ENCODE measurements at regions of chr11 and their contacts with region 1.

Region 1: DNA sequence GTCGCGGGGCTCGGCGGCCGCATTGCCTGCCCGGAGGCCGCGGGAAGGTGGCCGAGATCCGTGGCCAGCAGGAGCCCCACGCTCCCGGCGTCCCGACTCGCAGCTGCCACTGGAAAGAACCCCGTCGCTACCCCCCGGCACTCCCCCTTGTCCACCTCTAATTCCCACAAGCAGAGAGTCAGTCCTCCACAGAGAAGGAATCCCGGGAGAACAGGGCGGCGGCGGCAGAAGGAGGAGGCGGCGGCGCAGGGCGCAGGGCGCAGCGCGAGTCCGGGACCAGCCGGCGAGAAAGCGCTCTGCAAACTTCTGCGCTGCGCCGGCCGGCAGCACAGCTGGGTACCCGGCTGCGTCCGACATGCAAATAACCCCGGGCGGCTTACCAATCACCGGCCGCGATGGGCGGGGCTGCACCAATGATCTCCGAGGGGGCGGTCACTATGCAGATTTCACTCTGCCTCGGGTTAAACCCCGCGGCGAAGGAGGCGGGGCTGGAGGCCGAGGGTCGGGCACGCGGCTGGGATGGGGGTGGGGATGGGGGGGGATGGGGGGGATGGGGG is at the start of gene ABTB2:
- DNase-seq: peak; percentile 96
- H3K4me3 ChIP-seq: peak within 1 kb of the TSS in 2 of 3 experiments; percentile 26 to 29
- H3K27ac ChIP-seq: no peak within 1 kb of the TSS
- H3K4me1 ChIP-seq: peaks cover 14% of the 10 kb centered on the region
- H3K27me3 ChIP-seq: peaks cover 24 to 40% of the 10 kb centered on the region in 2 experiments
- CTCF ChIP-seq: no peak
- POLR2A ChIP-seq: peak; percentile 69
- total RNA-seq, gene ABTB2: 0.11 and 0.25 TPM in 2 replicates

Region 2: GRCh38 chr11:33996498-33997454 is 361.0 kb before region 1 on chr11:
- CTCF ChIA-PET with region 1: interaction called, 8 read pairs
- POLR2A ChIA-PET with region 1: no interaction called
- dilution Hi-C with region 1: no loop called
- intact Hi-C with region 1: loop called (anchors 1 kb)
- DNase-seq: peak; percentile 75
- H3K4me3 ChIP-seq: no peak overlapping the region
- H3K27ac ChIP-seq: no peak overlapping the region
- H3K4me1 ChIP-seq: no peaks in the 10 kb centered on the region
- H3K27me3 ChIP-seq: peaks cover 20 to 27% of the 10 kb centered on the region in 2 experiments
- CTCF ChIP-seq: peak; percentile 63 to 77
- POLR2A ChIP-seq: no peak

Region 3: DNA sequence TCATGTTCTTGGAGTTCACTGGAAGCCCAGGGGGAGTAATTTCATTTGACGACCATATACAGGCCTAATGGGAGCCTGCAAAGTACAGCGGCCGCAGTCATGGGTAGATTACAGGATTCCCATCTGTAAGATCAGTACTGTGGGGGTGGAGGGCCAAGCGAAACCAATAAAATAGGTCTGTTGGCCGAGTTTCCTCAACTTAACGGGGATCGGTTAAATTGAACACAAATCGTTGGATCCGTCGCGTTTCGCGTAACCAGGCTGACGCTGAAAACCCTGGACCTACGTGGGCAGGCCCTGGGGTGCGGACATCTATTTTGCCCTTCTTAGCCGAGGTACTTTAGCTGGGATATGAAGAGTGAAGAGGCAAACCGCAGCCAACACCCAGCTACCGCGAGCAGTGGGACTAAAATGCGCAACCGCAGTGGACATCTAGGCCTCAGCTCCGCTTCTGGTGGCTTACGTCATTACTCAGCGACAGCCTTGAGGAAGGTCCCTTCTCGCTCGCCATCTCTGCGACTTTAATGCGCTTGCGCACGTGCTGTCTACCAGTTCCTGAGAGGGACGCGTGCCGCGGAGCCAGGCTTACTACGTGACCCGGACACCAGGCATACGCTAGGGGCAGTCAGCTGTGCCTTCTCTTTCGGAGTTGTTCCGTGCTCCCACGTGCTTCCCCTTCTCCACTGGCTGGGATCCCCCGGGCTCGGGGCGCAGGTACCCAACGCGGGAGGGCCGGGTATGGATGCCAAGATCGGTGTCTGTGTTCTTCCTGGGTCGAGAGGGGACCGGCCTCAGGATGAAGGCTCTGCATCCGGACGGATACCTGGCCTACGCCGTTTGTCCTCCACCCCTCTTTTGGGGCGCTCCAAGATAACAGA is 252.5 kb before region 1 on chr11 and contains the start of gene NAT10:
- CTCF ChIA-PET with region 1: no interaction called
- POLR2A ChIA-PET with region 1: no interaction called
- dilution Hi-C with region 1: no loop called
- intact Hi-C with region 1: loop called (anchors 2 kb)
- DNase-seq: peak; percentile 99
- H3K4me3 ChIP-seq: peak within 1 kb of the TSS; percentile 27 to 79 (median 71)
- H3K27ac ChIP-seq: peak within 1 kb of the TSS; percentile 44
- H3K4me1 ChIP-seq: peaks cover 19% of the 10 kb centered on the region
- H3K27me3 ChIP-seq: no peaks in the 10 kb centered on the region
- CTCF ChIP-seq: peak in 1 of 2 donors; percentile 16
- POLR2A ChIP-seq: peak; percentile 99
- total RNA-seq, gene NAT10: 54.9 and 57.6 TPM in 2 replicates

Region 4: DNA sequence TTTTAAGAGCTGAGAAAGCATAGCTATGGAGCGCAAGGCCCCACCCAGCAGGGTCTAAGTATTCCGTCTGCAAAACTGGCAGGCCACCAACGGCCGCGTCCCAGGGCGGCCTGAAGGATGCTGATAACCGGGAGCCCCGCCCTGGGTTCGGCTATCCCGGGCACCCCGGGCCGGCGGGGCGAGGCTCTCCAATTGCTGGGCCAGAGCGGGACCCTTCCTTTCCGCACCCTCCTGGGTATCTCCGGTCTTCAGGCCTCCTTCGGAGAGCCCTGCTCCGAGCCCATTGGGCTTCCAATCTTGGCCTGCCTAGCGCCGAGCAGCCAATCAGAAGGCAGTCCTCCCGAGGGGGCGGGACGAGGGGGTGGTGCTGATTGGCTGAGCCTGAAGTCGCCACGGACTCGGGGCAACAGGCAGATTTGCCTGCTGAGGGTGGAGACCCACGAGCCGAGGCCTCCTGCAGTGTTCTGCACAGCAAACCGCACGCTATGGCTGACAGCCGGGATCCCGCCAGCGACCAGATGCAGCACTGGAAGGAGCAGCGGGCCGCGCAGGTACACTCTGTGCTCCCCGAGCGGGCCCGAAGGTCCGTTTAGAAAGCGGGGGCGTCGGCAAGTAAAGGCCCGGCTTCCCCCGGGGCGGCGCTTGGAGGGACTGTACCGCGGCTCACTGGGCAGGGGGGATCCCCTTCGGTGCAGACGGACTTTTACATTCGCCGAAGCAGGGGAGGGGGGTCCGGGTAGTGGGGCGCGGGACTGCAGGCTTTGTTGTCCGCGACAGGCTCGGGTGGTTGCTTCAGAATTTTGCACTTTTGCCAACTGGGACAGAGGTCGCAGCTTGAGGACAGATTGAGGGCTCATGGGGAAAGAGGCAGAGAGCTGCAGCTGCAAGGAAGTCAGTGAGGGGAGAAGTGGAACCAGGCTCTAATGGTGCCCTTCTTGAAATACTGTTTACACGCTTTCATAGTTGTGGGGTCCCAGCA is 81.0 kb after region 1 on chr11 and contains the start of gene CAT:
- CTCF ChIA-PET with region 1: no interaction called
- POLR2A ChIA-PET with region 1: no interaction called
- dilution Hi-C with region 1: no loop called
- intact Hi-C with region 1: loop called (anchors 2 kb)
- DNase-seq: peak; percentile 99
- H3K4me3 ChIP-seq: peak within 1 kb of the TSS; percentile 59 to 81 (median 64)
- H3K27ac ChIP-seq: peak within 1 kb of the TSS; percentile 19
- H3K4me1 ChIP-seq: peaks cover 9% of the 10 kb centered on the region
- H3K27me3 ChIP-seq: peaks cover 0 to 1% of the 10 kb centered on the region in 2 experiments
- CTCF ChIP-seq: no peak
- POLR2A ChIP-seq: peak; percentile 67
- total RNA-seq, gene CAT: 27.2 and 32.7 TPM in 2 replicates

Region 5: GRCh38 chr11:34492806-34493414 is 135.1 kb after region 1 on chr11:
- CTCF ChIA-PET with region 1: interaction called, 3 read pairs
- POLR2A ChIA-PET with region 1: no interaction called
- dilution Hi-C with region 1: no loop called
- intact Hi-C with region 1: loop called (anchors 2 kb)
- DNase-seq: peak; percentile 64
- H3K4me3 ChIP-seq: no peak overlapping the region
- H3K27ac ChIP-seq: no peak overlapping the region
- H3K4me1 ChIP-seq: no peaks in the 10 kb centered on the region
- H3K27me3 ChIP-seq: peaks cover 6% of the 10 kb centered on the region in 2 experiments
- CTCF ChIP-seq: peak; percentile 42 to 50
- POLR2A ChIP-seq: no peak

Measured in endothelial cell of umbilical vein (primary cell).